Mammary epithelial cell (primary cell): ENCODE measurements at regions of chr10 and their contacts with region 1.

Region 1: DNA sequence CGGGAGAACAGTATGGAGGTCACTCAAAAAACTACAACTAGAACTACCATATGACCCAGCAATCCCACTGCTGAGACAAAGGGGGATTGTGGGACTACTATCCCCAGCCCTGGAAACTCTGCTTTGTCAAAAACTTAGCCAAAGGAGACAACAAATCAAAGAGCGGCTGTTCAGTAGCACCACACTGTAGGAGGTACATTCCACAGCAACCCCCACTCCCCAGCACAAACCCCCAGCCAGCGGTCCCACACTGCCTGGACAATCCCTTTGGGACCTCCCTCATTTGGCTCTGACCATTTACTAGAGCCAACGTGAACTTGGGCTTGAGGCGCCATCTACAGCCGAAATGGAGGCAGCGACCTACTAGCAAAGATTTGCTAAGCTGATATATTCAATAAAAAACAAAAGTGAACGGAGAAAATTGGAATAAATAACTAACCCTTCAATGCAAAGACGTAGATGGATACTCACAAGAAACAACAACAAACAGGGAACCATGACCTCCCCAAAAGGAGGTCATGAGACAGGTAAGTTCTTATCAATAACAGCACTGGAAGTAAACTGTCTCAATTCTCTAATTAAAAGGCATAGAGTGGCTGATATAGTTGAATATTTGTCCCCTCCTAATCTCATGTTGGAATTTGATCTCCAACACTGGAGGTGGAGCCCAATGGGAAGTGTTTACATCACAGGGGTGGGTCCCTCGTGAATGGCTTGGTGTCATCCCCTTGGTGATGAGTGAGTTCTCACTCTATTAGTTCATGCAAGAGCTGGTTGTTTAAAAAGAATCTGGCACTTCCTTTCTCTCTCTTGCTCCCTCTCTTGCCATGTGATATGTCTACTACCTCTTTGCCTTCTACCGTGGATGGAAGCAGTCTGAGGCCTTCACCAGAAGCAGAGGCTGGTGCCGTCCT is 119.0 kb upstream of the KCNMA1 start:
- DNase-seq: peak; percentile 33
- H3K4me3 ChIP-seq: no peak overlapping the region
- H3K27ac ChIP-seq: no peak overlapping the region
- H3K4me1 ChIP-seq: peaks cover 8% of the 10 kb centered on the region
- H3K27me3 ChIP-seq: no peaks in the 10 kb centered on the region
- CTCF ChIP-seq: peak; percentile 79 to 85

Region 2: DNA sequence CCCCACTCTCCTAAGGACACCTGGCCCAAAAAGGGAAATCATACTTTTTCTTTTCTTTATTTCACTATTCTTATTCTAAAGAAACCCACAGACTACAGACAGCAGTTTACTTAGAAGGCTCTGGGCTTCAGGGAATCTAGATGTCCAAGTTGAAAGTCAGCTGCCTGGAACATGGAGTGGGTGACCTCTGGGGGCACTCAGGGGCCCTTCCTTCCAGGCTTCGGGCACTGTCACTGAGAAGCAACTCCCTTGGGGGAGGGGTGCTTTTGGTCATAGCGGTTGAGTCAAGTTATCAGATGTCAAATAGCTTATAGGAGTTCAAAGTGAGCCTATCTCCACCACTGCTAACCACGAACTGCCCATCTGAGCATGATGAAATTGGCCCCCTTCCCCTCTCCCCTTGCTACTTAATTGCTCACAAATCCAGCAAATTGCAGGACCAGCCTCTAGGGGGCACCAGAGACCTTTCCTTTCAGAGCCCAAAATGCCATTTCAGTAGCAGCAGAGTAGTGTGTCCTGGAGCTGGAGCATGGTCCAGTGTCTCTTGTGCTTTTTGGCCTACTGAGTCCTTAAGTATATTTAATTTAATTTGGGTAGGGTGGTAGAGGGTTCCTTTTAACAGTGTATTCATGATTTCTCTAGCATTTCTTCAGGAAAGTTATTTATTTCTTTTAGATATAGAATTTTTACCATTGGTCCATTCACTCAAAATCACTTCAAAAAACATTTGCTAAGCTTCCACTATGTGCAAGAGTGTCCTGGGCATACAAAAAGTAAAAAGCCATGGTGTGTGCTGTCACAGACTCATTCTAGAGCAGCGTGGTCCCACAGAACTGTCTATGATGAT is 582.7 kb before region 1 on chr10:
- CTCF ChIA-PET with region 1: no interaction called
- dilution Hi-C with region 1: no loop called
- in situ Hi-C with region 1: no loop called
- intact Hi-C with region 1: loop called (anchors 1 kb)
- DNase-seq: peak; percentile 62
- H3K4me3 ChIP-seq: no peak overlapping the region
- H3K27ac ChIP-seq: no peak overlapping the region
- H3K4me1 ChIP-seq: peaks cover 7% of the 10 kb centered on the region
- H3K27me3 ChIP-seq: no peaks in the 10 kb centered on the region
- CTCF ChIP-seq: peak; percentile 93 to 95

Region 3: GRCh38 chr10:77251297-77252013 is 505.1 kb before region 1 on chr10:
- CTCF ChIA-PET with region 1: no interaction called
- dilution Hi-C with region 1: no loop called
- in situ Hi-C with region 1: no loop called
- intact Hi-C with region 1: loop called (anchors 2 kb)
- DNase-seq: peak; percentile 29
- H3K4me3 ChIP-seq: no peak overlapping the region
- H3K27ac ChIP-seq: no peak overlapping the region
- H3K4me1 ChIP-seq: peaks cover 10% of the 10 kb centered on the region
- H3K27me3 ChIP-seq: no peaks in the 10 kb centered on the region
- CTCF ChIP-seq: peak; percentile 67 to 77

Region 4: GRCh38 chr10:77524281-77524711 is 232.3 kb before region 1 on chr10:
- CTCF ChIA-PET with region 1: no interaction called
- dilution Hi-C with region 1: no loop called
- in situ Hi-C with region 1: no loop called
- intact Hi-C with region 1: loop called (anchors 10 kb)
- DNase-seq: peak; percentile 24
- H3K4me3 ChIP-seq: no peak overlapping the region
- H3K27ac ChIP-seq: peak overlapping the region; percentile 26
- H3K4me1 ChIP-seq: peaks cover 24% of the 10 kb centered on the region
- H3K27me3 ChIP-seq: no peaks in the 10 kb centered on the region
- CTCF ChIP-seq: no peak

Region 5: GRCh38 chr10:77718957-77719356 is 37.6 kb before region 1 on chr10:
- CTCF ChIA-PET with region 1: interaction called, 6 read pairs
- dilution Hi-C with region 1: no loop called
- in situ Hi-C with region 1: loop called in 1 of 2 experiments (anchors 5 kb)
- intact Hi-C with region 1: loop called (anchors 1 kb)
- DNase-seq: no peak
- H3K4me3 ChIP-seq: no peak overlapping the region
- H3K27ac ChIP-seq: no peak overlapping the region
- H3K4me1 ChIP-seq: peaks cover 9% of the 10 kb centered on the region
- H3K27me3 ChIP-seq: no peaks in the 10 kb centered on the region
- CTCF ChIP-seq: no peak

Region 6: DNA sequence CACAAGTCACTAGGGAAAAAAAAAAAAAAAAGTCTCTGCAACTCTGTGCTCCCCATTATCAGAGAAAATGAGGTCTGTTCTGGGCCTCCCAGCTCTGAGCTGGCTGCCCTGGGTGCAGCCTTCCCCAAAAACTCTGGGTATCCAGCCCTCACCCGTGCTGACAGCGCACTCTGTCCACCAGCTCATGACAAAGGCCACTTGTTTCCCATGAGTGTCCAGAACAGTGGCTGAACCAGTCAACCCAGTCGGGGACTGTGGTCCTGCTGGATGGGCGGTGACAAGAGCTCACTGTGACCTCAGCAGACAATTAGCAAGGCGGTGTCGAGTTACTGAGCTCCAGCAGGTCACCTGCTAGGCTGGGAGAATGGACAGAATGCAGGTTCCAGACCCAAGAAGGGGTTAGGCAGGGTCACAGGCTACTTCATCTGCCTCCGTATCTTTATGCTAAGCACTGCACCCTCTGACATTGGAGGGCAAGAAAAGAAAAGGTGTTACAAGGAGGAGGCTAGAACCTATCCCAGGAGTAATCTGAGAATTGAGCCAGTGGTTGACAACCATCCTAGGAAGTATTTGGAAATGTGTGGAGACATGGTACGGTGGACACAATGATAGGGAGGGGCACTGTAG is 132.8 kb after region 1 on chr10:
- CTCF ChIA-PET with region 1: no interaction called
- dilution Hi-C with region 1: no loop called
- in situ Hi-C with region 1: no loop called
- intact Hi-C with region 1: no loop called
- DNase-seq: peak; percentile 72
- H3K4me3 ChIP-seq: no peak overlapping the region
- H3K27ac ChIP-seq: peak overlapping the region; percentile 7
- H3K4me1 ChIP-seq: peaks cover 42% of the 10 kb centered on the region
- H3K27me3 ChIP-seq: no peaks in the 10 kb centered on the region
- CTCF ChIP-seq: no peak